ENCODE measurements at regions of chr14 and their contacts with region 1.

Region 1: GRCh38 chr14:75132382-75133086 is 5.7 kb upstream of the NEK9 start:
- DNase-seq: peak; percentile 40
- H3K4me3 Mint-ChIP-seq: no peak overlapping the region
- H3K27ac Mint-ChIP-seq: no peak overlapping the region
- H3K4me1 Mint-ChIP-seq: peaks cover 22% of the 10 kb centered on the region
- H3K27me3 Mint-ChIP-seq: no peaks in the 10 kb centered on the region

Region 2: GRCh38 chr14:75165586-75166391 is 33.3 kb after region 1 on chr14:
- intact Hi-C with region 1: loop called (anchors 5 kb)
- DNase-seq: no peak
- H3K4me3 Mint-ChIP-seq: no peak overlapping the region
- H3K27ac Mint-ChIP-seq: no peak overlapping the region
- H3K4me1 Mint-ChIP-seq: peaks cover 59% of the 10 kb centered on the region
- H3K27me3 Mint-ChIP-seq: no peaks in the 10 kb centered on the region

Region 3: DNA sequence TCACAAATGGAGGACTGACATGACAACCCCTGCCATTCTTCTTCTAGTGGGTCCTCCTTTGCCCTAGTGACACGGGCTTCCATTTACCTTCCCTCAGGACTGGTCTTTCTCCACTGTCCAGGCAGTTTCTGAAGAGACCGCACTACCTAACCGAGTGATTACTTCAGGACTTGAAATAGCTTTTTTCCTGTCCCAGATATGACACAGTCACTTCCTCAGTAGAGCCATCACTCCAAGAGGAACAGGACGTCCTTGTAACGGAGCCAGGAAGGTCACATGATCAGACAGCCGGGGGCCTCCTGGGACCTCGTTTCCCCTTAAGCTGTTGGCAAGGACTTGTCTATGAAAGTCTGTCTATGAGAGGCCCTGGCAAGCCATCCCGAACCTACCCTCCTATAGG is 208.4 kb after region 1 on chr14:
- intact Hi-C with region 1: no loop called
- DNase-seq: no peak
- H3K4me3 Mint-ChIP-seq: no peak overlapping the region
- H3K27ac Mint-ChIP-seq: no peak overlapping the region
- H3K4me1 Mint-ChIP-seq: no peaks in the 10 kb centered on the region
- H3K27me3 Mint-ChIP-seq: peaks cover 11% of the 10 kb centered on the region

Region 4: DNA sequence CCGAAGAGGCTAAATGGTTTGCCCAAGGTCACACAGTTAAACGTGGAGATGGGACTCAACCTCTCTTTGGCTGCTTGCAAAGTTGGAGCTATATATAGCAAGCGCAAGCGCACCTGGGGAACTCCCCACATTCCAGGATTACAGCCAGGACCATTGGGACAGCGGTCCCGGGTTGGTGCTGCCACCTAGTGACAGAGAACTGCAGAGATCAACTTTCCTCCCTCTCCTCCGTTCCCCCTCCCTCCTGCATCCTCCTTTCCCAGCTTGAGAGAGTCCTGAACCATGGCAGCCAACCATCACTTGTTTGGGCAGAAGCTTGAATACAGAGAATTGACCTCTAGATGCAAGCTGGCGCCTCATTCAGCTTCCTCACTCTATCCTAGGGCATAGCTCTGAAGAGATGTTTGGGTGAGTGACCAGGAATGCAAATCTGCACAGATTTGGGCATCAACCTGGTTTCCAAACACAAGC is 428.5 kb after region 1 on chr14:
- intact Hi-C with region 1: loop called (anchors 10 kb)
- DNase-seq: no peak
- H3K4me3 Mint-ChIP-seq: no peak overlapping the region
- H3K27ac Mint-ChIP-seq: peak overlapping the region; percentile 89
- H3K4me1 Mint-ChIP-seq: peaks cover 63% of the 10 kb centered on the region
- H3K27me3 Mint-ChIP-seq: no peaks in the 10 kb centered on the region

Measured in activated T-helper 2 cell treated with anti-CD3 and anti-CD28 coated beads, Interferon-gamma antibody, Interleukin-2, Interleukin-4, amounts not matched to agents 10 μg/mL and 5 μg/mL and 100 μg/mL, durations not matched to agents 14 hours and 24 hours and 36 hours (primary cell).